ENCODE measurements at regions of chr17 and their contacts with region 1.

Region 1: GRCh38 chr17:30256756-30257506 is 21.4 kb upstream of the SLC6A4 start:
- DNase-seq: no peak
- H3K4me3 ChIP-seq: no peak overlapping the region
- H3K27ac ChIP-seq: no peak overlapping the region
- H3K4me1 ChIP-seq: no peaks in the 10 kb centered on the region
- H3K27me3 ChIP-seq: no peaks in the 10 kb centered on the region
- CTCF ChIP-seq: no peak

Region 2: DNA sequence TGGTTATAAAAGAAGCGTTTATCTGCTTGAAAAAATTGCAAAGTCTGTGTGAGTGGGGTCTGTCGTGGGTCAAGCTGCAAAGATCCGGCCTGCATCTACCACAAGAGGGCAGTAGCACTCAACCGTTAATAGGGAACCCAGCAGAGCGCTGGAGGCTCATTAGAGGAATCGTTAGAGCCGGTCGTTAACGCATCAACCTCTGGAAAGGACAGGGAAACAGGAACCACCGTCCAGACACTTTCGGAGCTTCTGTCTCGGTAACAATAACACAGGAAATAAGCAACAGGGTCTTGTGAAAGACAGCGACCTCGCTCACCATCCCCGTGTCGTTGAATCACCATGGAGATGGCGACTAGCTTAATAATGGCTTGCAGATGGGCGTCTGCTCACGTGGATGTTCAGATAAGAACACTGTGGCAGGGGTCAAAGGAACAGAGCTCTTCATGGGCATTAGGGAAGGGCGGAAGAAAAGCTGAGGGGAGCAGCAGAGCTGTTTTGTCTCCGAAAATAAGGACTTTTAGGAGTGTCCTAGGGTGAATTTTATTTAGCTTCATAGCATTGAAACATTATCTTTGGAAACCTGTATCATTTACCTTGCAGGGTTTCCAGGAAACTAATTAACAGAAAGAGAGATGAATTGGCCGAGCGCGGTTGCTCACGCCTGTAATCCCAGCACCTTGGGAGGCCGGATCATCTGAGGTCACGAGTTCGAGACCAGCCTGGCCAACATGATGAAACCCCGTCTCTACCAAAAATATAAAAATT is 152.2 kb before region 1 on chr17:
- intact Hi-C with region 1: loop called (anchors 10 kb)
- DNase-seq: peak; percentile 78 to 81
- H3K4me3 ChIP-seq: peak overlapping the region; percentile 27 to 46
- H3K27ac ChIP-seq: no peak overlapping the region
- H3K4me1 ChIP-seq: peaks cover 0 to 3% (median 1%) of the 10 kb centered on the region in 4 donors
- H3K27me3 ChIP-seq: no peaks in the 10 kb centered on the region
- CTCF ChIP-seq: peak; percentile 74 to 87

Region 3: DNA sequence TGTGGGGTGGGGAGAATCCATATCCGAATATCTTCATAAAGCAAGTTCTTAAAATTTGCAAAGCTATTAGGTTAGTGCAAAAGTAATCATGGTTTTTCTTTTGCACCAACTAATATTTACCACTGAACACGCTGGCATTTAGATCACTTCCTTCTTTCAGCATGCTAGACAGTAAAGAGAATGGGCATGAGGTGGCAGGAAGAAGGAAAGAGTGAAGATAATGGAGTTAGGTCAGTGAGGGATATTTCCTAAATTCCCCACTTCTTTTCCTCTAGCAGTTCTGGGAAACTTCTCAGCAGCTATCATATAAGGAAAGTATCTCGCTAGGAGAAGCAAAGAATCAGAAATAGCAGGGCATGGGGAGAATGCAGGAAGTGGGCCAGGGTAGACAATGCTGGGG is 60.4 kb before region 1 on chr17:
- intact Hi-C with region 1: no loop called
- DNase-seq: no peak
- H3K4me3 ChIP-seq: no peak overlapping the region
- H3K27ac ChIP-seq: no peak overlapping the region
- H3K4me1 ChIP-seq: no peaks in the 10 kb centered on the region
- H3K27me3 ChIP-seq: peaks cover 0 to 3% of the 10 kb centered on the region in 2 donors
- CTCF ChIP-seq: no peak

Measured in tibial artery (tissue), 4 donors.